Aorta (tissue), 5 donors: ENCODE measurements at regions of chr5 and their contacts with region 1.

Region 1: DNA sequence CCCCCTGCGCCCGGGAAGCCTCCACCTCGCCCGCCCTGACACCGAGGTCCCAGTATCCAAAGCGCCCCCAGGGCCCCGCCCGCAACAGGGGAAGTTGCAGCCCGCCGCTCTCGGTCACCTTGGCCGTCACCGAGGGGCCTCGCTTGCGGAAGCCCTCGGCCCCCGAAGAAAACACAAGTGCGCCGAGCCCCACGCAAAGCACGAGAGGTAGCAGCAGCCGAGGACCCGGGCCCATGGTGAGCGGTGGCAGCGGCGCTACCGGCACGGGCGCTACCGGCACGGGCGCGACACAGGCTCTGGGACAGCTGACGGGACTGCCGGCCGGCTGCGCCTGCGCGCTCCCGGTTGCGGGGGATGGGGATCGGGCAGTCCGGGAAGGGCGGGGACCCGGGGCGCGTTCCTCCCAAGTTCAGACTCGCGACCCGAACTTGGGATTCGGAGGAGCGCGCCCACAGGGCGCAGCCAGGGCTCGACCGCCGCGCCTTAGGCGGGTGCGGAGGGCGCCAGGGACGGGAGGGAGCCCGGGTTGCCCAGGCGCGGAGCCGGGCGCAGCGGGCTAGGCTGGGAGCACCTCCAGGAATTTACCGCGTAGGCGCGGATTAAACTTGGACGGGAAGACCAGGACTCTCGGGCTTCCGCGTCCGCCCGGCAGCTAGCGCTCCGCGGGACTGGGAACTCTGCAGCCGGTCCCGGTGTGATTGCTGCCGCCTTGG is at the start of gene PPIC:
- DNase-seq: peak; percentile 92 to 97
- ATAC-seq: peak; percentile 96
- H3K4me3 ChIP-seq: peak within 1 kb of the TSS; percentile 70 to 92
- H3K27ac ChIP-seq: peak within 1 kb of the TSS; percentile 82 to 88
- H3K4me1 ChIP-seq: no peaks in the 10 kb centered on the region
- H3K27me3 ChIP-seq: no peaks in the 10 kb centered on the region
- total RNA-seq, gene PPIC: 52.5 to 71.1 TPM

Region 2: GRCh38 chr5:122845229-122846050 is 191.1 kb before region 1 on chr5 and contains the start of gene SNX24:
- intact Hi-C with region 1: loop called in 1 of 2 experiments (anchors 2 kb)
- DNase-seq: peak; percentile 91 to 93
- ATAC-seq: peak; percentile 90
- H3K4me3 ChIP-seq: peak within 1 kb of the TSS; percentile 67 to 93
- H3K27ac ChIP-seq: peak within 1 kb of the TSS; percentile 53 to 64
- H3K4me1 ChIP-seq: no peaks in the 10 kb centered on the region
- H3K27me3 ChIP-seq: no peaks in the 10 kb centered on the region
- total RNA-seq, gene SNX24: 20.6 to 21.0 TPM